HEK293 (cell line): ENCODE measurements at regions of chr11 and their contacts with region 1.

Region 1: GRCh38 chr11:112289588-112290492 is 29.2 kb upstream of the PLET1 start:
- H3K4me3 ChIP-seq: peak overlapping the region; percentile 53
- H3K27ac ChIP-seq: no peak overlapping the region
- H3K4me1 ChIP-seq: no peaks in the 10 kb centered on the region; the same call in 1 of the 2 replicates
- CTCF ChIP-seq: peak; percentile 66

Region 2: GRCh38 chr11:112302231-112302732 is 12.4 kb after region 1 on chr11:
- CTCF ChIA-PET with region 1: no interaction called
- POLR2A ChIA-PET with region 1: no interaction called
- H3K4me3 ChIP-seq: no peak overlapping the region
- H3K27ac ChIP-seq: peak overlapping the region; percentile 56; the same call in 1 of the 2 replicates
- H3K4me1 ChIP-seq: peaks cover 4% of the 10 kb centered on the region; the same call in 1 of the 2 replicates
- CTCF ChIP-seq: no peak

Region 3: GRCh38 chr11:112401036-112401769 is 111.4 kb after region 1 on chr11:
- CTCF ChIA-PET with region 1: no interaction called
- POLR2A ChIA-PET with region 1: no interaction called
- H3K4me3 ChIP-seq: no peak overlapping the region
- H3K27ac ChIP-seq: no peak overlapping the region
- H3K4me1 ChIP-seq: no peaks in the 10 kb centered on the region
- CTCF ChIP-seq: no peak

Region 4: GRCh38 chr11:112453601-112454577 is 164.0 kb after region 1 on chr11:
- CTCF ChIA-PET with region 1: interaction called, 18 read pairs
- POLR2A ChIA-PET with region 1: no interaction called
- H3K4me3 ChIP-seq: no peak overlapping the region
- H3K27ac ChIP-seq: no peak overlapping the region
- H3K4me1 ChIP-seq: no peaks in the 10 kb centered on the region
- CTCF ChIP-seq: no peak

Region 5: GRCh38 chr11:113289431-113290187 is 999.8 kb after region 1 on chr11:
- CTCF ChIA-PET with region 1: interaction called, 10 read pairs
- POLR2A ChIA-PET with region 1: no interaction called
- H3K4me3 ChIP-seq: no peak overlapping the region
- H3K27ac ChIP-seq: no peak overlapping the region
- H3K4me1 ChIP-seq: no peaks in the 10 kb centered on the region
- CTCF ChIP-seq: peak; percentile 69